ENCODE measurements at regions of chr19 and their contacts with region 1.

Region 1: GRCh38 chr19:11197264-11198174 is at the start of gene KANK2:
- DNase-seq: peak; percentile 67
- H3K4me3 Mint-ChIP-seq: peak within 1 kb of the TSS; percentile 75
- H3K27ac Mint-ChIP-seq: no peak within 1 kb of the TSS
- H3K4me1 Mint-ChIP-seq: no peaks in the 10 kb centered on the region
- H3K27me3 Mint-ChIP-seq: peaks cover 21% of the 10 kb centered on the region
- total RNA-seq, gene KANK2: 2.7 and 3.9 TPM in 2 replicates

Region 2: GRCh38 chr19:11155373-11156120 is 42.0 kb before region 1 on chr19 and contains the start of gene SPC24:
- intact Hi-C with region 1: loop called (anchors 5 kb)
- DNase-seq: peak; percentile 94
- H3K4me3 Mint-ChIP-seq: peak within 1 kb of the TSS; percentile 84
- H3K27ac Mint-ChIP-seq: peak within 1 kb of the TSS; percentile 89
- H3K4me1 Mint-ChIP-seq: peaks cover 7% of the 10 kb centered on the region
- H3K27me3 Mint-ChIP-seq: no peaks in the 10 kb centered on the region
- total RNA-seq, gene SPC24: 30.3 and 30.4 TPM in 2 replicates

Region 3: DNA sequence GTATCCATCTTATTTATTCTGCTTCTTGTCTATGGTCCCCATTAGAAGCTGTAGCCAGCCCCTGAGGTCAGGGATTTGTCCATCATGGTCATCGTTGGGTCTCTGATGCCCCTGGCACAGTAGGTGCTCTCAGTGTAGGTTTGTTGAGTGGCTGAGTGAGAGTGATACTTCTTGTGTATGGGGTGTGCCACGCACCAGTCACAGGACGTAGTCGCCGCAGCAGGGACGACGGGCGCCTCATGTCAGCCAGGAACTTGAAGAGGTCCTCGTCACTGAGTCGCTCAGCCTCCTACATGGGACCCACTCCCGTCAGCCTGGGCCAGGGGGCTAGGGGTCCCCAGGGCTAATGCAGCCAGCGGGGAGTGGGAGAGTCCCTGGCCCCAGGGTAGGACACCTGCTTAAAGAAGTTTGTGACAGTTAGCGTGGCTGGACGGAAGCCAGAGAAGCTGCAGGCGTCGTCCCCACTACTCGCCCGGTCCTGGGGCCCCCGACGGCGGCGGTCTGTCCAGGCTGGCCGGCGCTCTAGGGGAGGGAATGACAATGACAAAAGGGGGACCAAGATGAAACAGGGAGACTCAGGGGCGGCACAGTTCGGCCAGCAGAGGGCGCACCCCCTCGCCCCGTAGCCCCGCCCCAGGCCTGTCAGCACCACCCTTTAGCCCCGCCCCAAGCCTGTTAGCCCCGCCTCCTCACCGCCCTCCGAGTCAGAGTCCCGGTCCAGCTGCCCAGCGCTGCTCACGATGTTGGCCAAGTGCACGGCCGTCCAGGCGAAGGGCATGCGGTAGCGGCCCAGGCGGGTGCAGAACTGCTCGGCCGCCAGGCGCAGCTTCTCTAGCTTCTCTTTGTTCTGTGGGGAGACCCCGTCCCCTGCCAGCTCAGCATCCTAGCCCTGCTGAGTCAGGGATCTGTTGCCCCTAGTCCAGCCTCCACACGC is 45.6 kb after region 1 on chr19:
- intact Hi-C with region 1: loop called (anchors 5 kb)
- DNase-seq: peak; percentile 57
- H3K4me3 Mint-ChIP-seq: no peak overlapping the region
- H3K27ac Mint-ChIP-seq: no peak overlapping the region
- H3K4me1 Mint-ChIP-seq: no peaks in the 10 kb centered on the region
- H3K27me3 Mint-ChIP-seq: peaks cover 8% of the 10 kb centered on the region